ENCODE measurements at regions of chr13 and their contacts with region 1.

Region 1: GRCh38 chr13:30679483-30680330 is 55.6 kb upstream of the ALOX5AP start:
- DNase-seq: no peak
- ATAC-seq: peak in 3 of 4 donors; percentile 61 to 78 (median 74)
- H3K4me3 ChIP-seq: no peak overlapping the region
- H3K27ac ChIP-seq: no peak overlapping the region
- H3K4me1 ChIP-seq: no peaks in the 10 kb centered on the region
- H3K27me3 ChIP-seq: no peaks in the 10 kb centered on the region
- CTCF ChIP-seq: peak; percentile 43

Region 2: DNA sequence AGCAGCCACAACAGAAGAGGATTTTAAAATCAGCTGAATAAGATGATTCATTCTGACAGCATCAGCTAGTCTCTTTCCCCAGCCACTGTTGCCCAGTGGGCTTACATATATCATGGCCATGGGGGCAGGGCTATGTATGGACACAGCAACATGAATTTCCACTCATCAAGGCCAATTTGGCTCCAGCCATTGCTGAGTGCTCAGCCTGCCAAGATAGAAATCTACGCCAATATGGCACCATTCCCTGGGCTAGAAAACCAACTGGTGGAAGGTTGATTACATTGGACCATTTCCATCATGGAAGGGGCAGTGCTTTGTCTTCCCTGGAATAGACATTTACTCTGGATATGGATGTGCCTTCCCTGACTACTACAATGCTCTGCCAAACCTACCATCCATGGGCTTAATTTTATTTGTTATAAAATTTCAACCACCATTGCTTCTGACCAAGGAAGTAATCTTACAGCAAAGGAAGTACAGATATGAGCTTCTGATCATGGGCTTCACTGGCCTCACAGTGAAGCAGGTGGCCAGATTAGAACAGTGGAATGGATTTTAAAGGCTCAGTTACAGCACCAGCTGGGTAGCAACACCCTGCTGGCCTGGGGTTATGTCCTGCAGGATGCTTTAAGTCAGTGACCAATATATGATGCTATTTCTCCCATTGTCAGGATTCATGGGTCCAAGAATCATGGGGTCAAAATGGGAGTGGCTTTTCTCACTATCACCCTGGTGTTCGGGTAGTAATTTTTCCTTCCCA is 45.8 kb after region 1 on chr13:
- intact Hi-C with region 1: loop called in 1 of 2 experiments (anchors 5 kb)
- DNase-seq: no peak
- ATAC-seq: peak in 3 of 4 donors; percentile 40 to 52 (median 48)
- H3K4me3 ChIP-seq: no peak overlapping the region
- H3K27ac ChIP-seq: no peak overlapping the region
- H3K4me1 ChIP-seq: peaks cover 13% of the 10 kb centered on the region
- H3K27me3 ChIP-seq: no peaks in the 10 kb centered on the region
- CTCF ChIP-seq: no peak

Region 3: DNA sequence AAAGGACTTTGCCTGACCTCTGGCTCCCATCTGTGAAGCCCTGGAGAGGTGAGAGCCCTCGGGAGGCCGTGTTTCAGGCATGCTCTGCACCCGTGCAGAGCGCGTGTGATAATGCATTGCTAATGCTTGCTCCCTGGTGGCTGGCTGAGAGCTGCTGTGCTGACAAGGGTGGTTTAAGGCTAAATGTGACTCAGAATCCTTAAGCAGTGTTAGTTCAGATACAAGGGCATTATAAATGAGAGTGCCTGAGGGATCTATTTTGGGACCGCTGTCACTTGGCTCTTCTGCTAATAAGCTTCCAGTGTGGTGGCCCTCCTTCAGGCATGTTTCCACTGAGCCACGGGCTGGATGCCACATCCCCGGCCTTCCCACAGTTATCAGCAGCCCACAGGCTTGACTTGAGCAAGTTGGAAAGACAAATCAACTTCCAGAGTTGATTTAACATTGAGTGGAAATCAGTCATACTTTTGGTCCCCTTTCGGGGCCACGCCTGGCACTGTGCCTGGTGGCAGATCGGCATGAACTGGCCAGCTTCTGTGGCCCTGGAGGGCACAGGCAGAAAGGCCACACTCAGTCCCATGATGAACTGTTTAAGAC is 72.6 kb after region 1 on chr13:
- intact Hi-C with region 1: loop called in 1 of 2 experiments (anchors 5 kb)
- DNase-seq: peak; percentile 52 to 84
- ATAC-seq: peak; percentile 96 to 97 (median 97)
- H3K4me3 ChIP-seq: no peak overlapping the region
- H3K27ac ChIP-seq: peak overlapping the region; percentile 79
- H3K4me1 ChIP-seq: peaks cover 31% of the 10 kb centered on the region
- H3K27me3 ChIP-seq: no peaks in the 10 kb centered on the region
- CTCF ChIP-seq: no peak

Measured in psoas muscle (tissue), 8 donors.